ENCODE measurements at regions of chr1 and their contacts with region 1.

Region 1: GRCh38 chr1:44730741-44731512 is at the start of gene RNU5D-1:
- DNase-seq: peak; percentile 95 to 96
- H3K4me3 ChIP-seq: peak within 1 kb of the TSS; percentile 47; the same call in 1 of the 2 replicates
- H3K27ac ChIP-seq: peak within 1 kb of the TSS; percentile 98
- H3K4me1 ChIP-seq: peaks cover 54% of the 10 kb centered on the region
- H3K27me3 ChIP-seq: no peaks in the 10 kb centered on the region
- CTCF ChIP-seq: peak; percentile 92
- total RNA-seq, gene RNU5D-1: not detected in 2 replicates

Region 2: GRCh38 chr1:44423591-44424537 is 307.1 kb before region 1 on chr1:
- CTCF ChIA-PET with region 1: no interaction called
- POLR2A ChIA-PET with region 1: interaction called, 15 read pairs
- intact Hi-C with region 1: no loop called
- DNase-seq: peak in 1 of 2 experiments; percentile 64
- H3K4me3 ChIP-seq: no peak overlapping the region
- H3K27ac ChIP-seq: no peak overlapping the region
- H3K4me1 ChIP-seq: no peaks in the 10 kb centered on the region
- H3K27me3 ChIP-seq: no peaks in the 10 kb centered on the region
- CTCF ChIP-seq: no peak

Region 3: GRCh38 chr1:44714944-44715571 is 15.9 kb before region 1 on chr1:
- CTCF ChIA-PET with region 1: interaction called, 11 read pairs
- POLR2A ChIA-PET with region 1: no interaction called
- intact Hi-C with region 1: loop called (anchors 1 kb)
- DNase-seq: peak; percentile 64 to 69
- H3K4me3 ChIP-seq: no peak overlapping the region
- H3K27ac ChIP-seq: no peak overlapping the region
- H3K4me1 ChIP-seq: peaks cover 21% of the 10 kb centered on the region
- H3K27me3 ChIP-seq: no peaks in the 10 kb centered on the region
- CTCF ChIP-seq: peak; percentile 91

Region 4: DNA sequence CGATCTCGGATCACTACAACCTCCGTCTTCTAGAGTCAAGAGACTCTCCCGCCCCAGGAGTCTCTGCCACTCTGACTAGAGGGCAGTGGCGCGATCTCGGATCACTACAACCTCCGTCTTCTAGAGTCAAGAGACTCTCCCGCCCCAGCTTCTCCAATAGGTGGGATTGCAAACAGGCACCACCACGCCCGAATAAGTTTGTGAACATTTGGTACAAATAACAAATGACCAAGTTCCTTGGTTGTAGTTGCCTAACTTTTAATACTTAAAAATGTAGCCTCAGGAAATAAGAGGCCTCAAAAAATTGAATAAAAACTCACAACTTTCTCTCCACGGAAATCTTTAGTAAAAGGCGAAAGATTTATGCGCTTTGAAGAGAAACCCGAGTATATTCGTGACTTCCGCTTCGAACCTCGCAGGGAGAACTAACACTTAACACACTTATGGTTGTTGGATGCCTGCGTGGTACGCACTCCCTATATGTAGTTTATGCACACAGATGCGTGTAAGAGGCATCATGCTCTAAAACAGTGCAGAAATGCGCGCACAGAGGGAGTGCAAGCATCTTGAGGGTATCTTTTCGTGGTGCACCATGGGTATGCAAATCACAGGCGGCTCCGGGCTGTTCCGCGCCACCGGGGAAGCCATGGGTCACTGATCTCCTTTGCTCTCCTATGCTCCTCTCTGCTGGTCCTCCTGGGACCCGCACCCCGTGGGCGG is 88.8 kb after region 1 on chr1:
- CTCF ChIA-PET with region 1: no interaction called
- POLR2A ChIA-PET with region 1: interaction called, 3 read pairs
- intact Hi-C with region 1: loop called (anchors 1 kb)
- DNase-seq: peak; percentile 84 to 98
- H3K4me3 ChIP-seq: peak overlapping the region; percentile 67
- H3K27ac ChIP-seq: peak overlapping the region; percentile 83
- H3K4me1 ChIP-seq: peaks cover 27% of the 10 kb centered on the region
- H3K27me3 ChIP-seq: no peaks in the 10 kb centered on the region
- CTCF ChIP-seq: no peak

Region 5: DNA sequence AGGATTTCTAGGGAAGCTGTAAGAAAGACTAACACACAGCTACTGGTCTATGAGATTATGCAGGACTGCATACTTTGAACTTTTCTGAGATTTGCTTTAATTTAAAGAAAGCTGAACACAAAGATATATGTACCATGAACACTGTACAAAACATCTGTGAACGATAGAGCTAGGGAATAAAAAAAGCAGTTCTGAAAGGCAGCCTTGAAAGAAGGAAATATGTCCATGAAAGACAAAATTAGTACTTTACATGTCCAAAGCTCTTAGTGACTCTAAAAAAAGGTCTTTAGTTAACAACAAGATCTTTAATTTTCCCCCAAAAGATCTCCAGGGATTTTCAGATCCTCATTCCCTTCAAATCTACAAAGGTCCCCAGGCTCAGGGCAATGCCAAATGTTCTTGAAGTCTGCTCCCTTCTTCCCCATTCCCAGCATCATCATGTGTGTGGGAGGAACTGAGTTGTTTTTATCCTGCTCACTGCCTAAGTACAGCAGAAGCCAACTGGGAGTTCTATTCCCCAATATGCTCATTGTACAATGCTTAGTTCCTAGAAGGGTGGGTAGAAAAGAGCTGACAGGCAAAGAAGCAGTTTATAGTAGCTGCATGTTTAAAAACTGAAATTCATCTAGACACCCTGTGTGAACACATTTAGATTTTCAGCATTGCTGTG is 172.2 kb after region 1 on chr1:
- CTCF ChIA-PET with region 1: no interaction called
- POLR2A ChIA-PET with region 1: no interaction called
- intact Hi-C with region 1: no loop called
- DNase-seq: no peak
- H3K4me3 ChIP-seq: no peak overlapping the region
- H3K27ac ChIP-seq: no peak overlapping the region
- H3K4me1 ChIP-seq: no peaks in the 10 kb centered on the region
- H3K27me3 ChIP-seq: no peaks in the 10 kb centered on the region
- CTCF ChIP-seq: no peak

Region 6: DNA sequence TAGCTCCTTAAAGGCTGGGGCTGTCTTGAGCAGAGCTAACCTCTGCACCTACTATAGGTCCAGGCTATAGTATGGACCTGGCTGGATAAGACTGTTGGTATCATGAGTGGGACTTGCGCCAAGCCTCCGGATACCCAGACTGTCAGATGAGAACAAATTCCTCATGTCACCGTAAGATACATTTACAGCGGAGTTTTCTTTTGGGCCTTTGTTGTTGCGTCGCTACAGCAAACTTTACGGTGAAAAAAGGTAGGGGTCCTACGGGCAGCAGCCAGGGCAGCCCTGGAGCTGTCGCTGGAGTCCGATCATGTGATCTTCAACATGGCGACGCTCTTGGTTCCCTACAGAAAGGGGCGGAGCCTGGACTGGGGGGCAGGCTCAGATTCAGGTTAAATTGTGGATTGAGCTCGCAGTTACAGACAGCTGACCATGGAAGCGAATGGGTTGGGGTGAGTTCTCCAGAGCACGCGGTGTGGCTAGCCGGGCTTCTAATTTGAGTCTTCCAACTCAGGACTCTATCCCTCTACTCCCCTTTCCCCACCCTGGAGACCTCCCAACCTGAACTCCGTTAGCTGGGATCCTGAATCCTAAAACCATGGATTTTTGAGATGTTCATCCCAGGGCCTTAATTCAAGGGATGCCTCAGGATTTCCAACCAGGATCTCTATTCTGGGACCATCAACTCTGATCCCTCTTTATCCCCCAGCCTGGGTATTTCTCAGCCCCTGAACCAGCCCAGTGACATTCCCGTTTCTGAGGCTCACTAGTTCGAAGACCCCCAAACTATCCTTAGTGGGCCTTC is 281.1 kb after region 1 on chr1 and contains the start of gene UROD:
- CTCF ChIA-PET with region 1: interaction called, 16 read pairs
- POLR2A ChIA-PET with region 1: interaction called, 12 read pairs
- intact Hi-C with region 1: loop called (anchors 1 kb)
- DNase-seq: peak; percentile 91 to 94
- H3K4me3 ChIP-seq: peak within 1 kb of the TSS; percentile 75
- H3K27ac ChIP-seq: peak within 1 kb of the TSS; percentile 41
- H3K4me1 ChIP-seq: peaks cover 20% of the 10 kb centered on the region
- H3K27me3 ChIP-seq: no peaks in the 10 kb centered on the region
- CTCF ChIP-seq: no peak
- total RNA-seq, gene UROD: 77.4 and 81.1 TPM in 2 replicates

Region 7: DNA sequence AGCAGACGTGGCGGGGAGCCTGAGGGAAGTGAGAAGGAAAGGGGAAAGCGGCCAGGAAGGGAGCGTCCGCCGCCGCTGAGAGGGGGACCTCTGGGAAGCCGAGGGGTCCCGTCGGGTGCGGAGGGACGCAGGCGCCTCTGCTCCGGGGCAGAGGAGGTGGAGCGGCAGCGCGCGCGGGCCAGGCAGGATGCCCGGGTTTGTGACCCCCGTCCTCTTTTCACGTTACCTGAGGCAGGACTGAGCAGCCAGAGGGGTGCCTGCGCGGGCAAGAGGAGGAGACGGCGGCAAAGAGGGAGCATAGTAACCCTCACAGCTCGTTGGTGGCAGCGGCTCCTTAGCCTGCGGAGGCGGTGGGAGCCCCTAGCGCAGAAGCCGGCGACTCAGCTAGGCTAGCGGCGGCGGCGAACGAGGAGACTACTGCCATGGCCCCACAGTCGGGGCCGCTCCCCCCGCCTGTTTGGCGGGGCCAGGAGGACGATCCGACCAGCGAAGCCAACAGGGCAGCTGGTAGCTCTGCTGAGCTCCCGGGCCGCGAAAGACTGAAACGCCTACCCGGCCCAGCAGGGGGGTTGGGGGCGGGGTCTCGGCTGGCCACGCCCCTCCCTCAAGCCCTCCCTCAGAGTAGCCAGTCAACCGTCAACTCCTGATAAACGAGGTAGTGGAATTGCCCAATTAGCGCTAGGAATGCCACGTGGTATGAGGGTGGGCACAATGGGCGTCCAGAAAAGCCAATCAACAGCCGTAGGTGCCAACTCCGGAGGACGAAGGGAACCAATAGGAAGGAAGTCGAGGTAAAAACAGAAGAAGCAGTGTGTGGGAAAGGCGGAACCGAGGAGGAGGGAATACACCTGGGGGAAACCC is 759.9 kb after region 1 on chr1 and contains the start of gene TESK2:
- CTCF ChIA-PET with region 1: interaction called, 6 read pairs
- POLR2A ChIA-PET with region 1: interaction called, 10 read pairs
- intact Hi-C with region 1: loop called (anchors 2 kb)
- DNase-seq: peak; percentile 100
- H3K4me3 ChIP-seq: peak within 1 kb of the TSS; percentile 73
- H3K27ac ChIP-seq: no peak within 1 kb of the TSS
- H3K4me1 ChIP-seq: peaks cover 16% of the 10 kb centered on the region
- H3K27me3 ChIP-seq: no peaks in the 10 kb centered on the region
- CTCF ChIP-seq: 0 out of 2 replicates have a peak, but pooled peaks have one; percentile 20
- total RNA-seq, gene TESK2: 13.8 and 17.5 TPM in 2 replicates

Region 8: DNA sequence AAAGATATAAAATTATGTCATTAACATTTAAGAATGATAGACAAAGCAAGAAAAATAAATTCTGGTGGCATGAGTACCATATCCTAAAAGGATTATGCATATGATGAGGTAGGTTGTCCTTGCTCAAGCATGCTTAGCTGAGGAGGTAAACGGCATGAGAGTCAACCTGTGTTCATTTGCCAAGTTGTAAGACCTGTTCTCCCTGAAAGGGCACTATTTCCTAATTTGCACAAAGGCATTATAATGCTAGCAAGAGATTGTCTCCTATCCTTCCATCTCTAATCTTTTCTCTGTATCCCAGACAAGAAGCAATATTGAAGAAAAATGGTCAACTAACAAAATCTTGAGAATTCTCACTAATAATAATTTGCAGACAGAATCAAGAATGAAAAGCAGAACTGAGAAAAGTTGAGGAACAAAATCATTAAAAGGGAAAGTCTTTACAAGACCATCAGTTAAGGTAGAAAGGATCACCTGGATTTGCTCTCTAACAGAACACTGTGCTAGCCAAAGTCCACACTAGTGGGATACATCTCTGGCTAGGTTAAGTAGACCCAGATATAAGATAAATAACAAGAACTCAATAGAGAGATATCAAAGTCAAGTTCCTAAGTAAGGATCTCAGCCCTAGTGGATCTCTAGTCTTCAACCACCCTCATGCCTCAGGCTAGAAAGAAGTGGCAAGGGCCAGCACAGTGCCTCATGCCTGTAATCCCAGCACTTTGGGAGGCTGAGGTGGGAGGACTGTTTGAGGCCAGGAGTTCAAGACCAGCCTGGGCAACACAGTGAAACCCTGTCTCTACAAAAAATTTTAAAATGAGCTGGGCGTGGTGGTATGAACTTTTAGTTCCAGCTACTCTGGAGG is 999.8 kb after region 1 on chr1:
- CTCF ChIA-PET with region 1: no interaction called
- POLR2A ChIA-PET with region 1: interaction called, 23 read pairs
- intact Hi-C with region 1: no loop called
- DNase-seq: peak; percentile 37 to 89
- H3K4me3 ChIP-seq: no peak overlapping the region
- H3K27ac ChIP-seq: peak overlapping the region; percentile 23
- H3K4me1 ChIP-seq: peaks cover 28% of the 10 kb centered on the region
- H3K27me3 ChIP-seq: no peaks in the 10 kb centered on the region
- CTCF ChIP-seq: no peak